Naive thymus-derived CD4-positive, alpha-beta T cell (primary cell): ENCODE measurements at regions of chr14 and their contacts with region 1.

Region 1: DNA sequence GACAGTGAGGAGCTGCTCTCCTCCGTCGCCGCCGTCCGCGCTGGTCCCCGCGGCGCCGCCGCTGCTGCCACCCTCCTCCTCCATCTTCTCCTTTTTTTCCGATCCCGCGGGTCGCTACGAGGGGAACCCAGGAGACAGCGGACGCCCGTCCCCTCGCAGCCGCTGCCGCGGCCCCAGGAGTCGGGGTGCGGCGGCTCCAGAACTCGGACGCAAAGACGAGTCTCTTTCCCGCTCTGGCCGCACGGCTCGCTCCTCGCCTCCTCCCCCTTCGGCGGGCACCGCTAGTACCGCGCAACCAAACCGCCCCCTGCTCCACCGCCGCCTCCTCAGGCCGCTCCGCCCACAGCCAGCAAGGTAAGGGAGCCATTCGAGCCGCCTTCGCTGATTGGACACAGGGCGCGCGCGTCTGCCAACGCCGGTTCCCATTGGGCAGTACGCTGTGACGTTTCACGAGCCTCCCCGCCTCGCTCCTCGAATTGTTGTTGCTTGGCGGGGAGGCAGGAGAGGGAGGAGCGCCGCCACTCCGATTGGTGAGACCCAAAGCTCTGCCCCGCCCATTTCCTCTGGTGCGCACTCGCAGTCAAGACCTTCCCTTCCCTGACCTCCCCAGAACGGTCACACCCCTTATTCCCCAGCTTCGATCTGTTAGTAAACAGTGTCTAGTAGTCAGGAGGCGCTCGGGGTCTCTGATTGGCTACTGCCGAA is at the start of gene RPS6KA5:
- DNase-seq: peak; percentile 93 to 100 (median 100)
- ATAC-seq: peak; percentile 89
- H3K4me3 ChIP-seq: peak within 1 kb of the TSS; percentile 59
- H3K4me3 Mint-ChIP-seq: peak within 1 kb of the TSS in 9 of 10 donors; percentile 80 to 90 (median 86)
- H3K27ac ChIP-seq: peak within 1 kb of the TSS; percentile 91
- H3K27ac Mint-ChIP-seq: peak within 1 kb of the TSS; percentile 28 to 83 (median 74)
- H3K4me1 ChIP-seq: peaks cover 36 to 38% of the 10 kb centered on the region in 2 donors
- H3K4me1 Mint-ChIP-seq: peaks cover 39 to 71% (median 64%) of the 10 kb centered on the region in 7 donors
- H3K27me3 ChIP-seq: no peaks in the 10 kb centered on the region
- H3K27me3 Mint-ChIP-seq: no peaks in the 10 kb centered on the region
- total RNA-seq, gene RPS6KA5: 31.9 to 43.5 (median 34.3) TPM

Region 2: DNA sequence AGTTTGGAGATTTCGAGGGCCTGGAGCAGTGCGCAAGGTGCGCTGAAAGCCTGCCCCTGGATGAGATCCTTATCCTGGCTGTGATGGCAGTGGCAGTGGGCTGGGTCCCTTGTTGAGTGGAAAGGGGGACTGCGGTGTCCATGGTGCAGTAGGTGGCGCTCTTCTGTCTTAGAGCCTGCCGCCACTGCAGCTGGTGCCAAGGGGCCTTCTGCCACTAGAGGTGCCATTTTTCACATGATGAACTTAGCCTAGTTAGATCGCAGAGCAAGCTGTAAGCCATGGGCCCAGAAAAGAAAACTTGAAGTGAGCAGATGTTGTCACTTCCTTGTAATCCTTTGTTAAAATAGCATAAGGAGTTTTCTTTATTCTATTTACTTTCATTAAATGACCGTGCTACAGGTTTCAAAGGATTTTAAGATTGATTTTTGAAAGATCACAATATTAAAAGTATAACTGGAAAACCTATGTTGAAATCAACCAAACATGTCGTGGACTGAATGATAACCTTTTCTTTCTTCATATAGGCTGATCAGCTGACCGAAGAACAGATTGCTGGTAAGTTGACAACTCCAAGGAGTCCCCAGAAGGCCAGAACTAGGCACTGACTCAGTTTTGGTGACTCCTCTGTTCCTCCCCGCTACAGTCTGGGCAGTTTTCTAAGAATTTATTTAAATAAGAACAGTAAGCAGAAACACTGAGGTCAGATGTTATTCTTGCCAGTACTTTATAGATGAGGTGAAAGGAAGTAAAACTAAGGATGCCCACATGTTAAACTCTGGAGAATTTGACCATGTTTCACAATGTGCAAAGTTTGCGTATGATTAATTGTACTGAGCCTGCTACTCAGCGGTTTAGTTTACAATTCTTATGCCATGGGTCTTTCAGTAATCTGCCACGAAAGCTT is 660.7 kb before region 1 on chr14:
- CTCF ChIA-PET with region 1: no interaction called
- POLR2A ChIA-PET with region 1: no interaction called
- intact Hi-C with region 1: loop called in 1 of 2 experiments (anchors 2 kb)
- DNase-seq: peak; percentile 60 to 89 (median 85)
- ATAC-seq: peak; percentile 69
- H3K4me3 ChIP-seq: peak overlapping the region; percentile 78
- H3K4me3 Mint-ChIP-seq: peak overlapping the region; percentile 91 to 100 (median 98)
- H3K27ac ChIP-seq: peak overlapping the region; percentile 92
- H3K27ac Mint-ChIP-seq: peak overlapping the region; percentile 38 to 100 (median 99)
- H3K4me1 ChIP-seq: peaks cover 49 to 50% of the 10 kb centered on the region in 2 donors
- H3K4me1 Mint-ChIP-seq: peaks cover 45 to 70% (median 62%) of the 10 kb centered on the region in 7 donors
- H3K27me3 ChIP-seq: no peaks in the 10 kb centered on the region
- H3K27me3 Mint-ChIP-seq: peaks cover 0 to 7% (median 0%) of the 10 kb centered on the region in 5 donors

Region 3: GRCh38 chr14:91009501-91010152 is 50.9 kb before region 1 on chr14:
- CTCF ChIA-PET with region 1: interaction called, 3 read pairs
- POLR2A ChIA-PET with region 1: interaction called, 3 read pairs
- intact Hi-C with region 1: loop called in 1 of 2 experiments (anchors 5 kb)
- DNase-seq: peak in 7 of 9 donors; percentile 17 to 60 (median 33)
- ATAC-seq: peak; percentile 86
- H3K4me3 ChIP-seq: no peak overlapping the region
- H3K4me3 Mint-ChIP-seq: peak overlapping the region in 9 of 10 donors; percentile 26 to 77 (median 62)
- H3K27ac ChIP-seq: no peak overlapping the region
- H3K27ac Mint-ChIP-seq: peak overlapping the region; percentile 29 to 81 (median 46)
- H3K4me1 ChIP-seq: peaks cover 0 to 28% of the 10 kb centered on the region in 2 donors
- H3K4me1 Mint-ChIP-seq: peaks cover 30 to 49% (median 44%) of the 10 kb centered on the region in 7 donors
- H3K27me3 ChIP-seq: no peaks in the 10 kb centered on the region
- H3K27me3 Mint-ChIP-seq: no peaks in the 10 kb centered on the region

Region 4: GRCh38 chr14:91114079-91115065 is 53.9 kb after region 1 on chr14:
- CTCF ChIA-PET with region 1: interaction called, 37 read pairs
- POLR2A ChIA-PET with region 1: interaction called, 105 read pairs
- intact Hi-C with region 1: loop called (anchors 1 kb)
- DNase-seq: peak; percentile 25 to 75 (median 66)
- ATAC-seq: peak; percentile 84
- H3K4me3 ChIP-seq: peak overlapping the region; percentile 76
- H3K4me3 Mint-ChIP-seq: peak overlapping the region; percentile 84 to 99 (median 93)
- H3K27ac ChIP-seq: peak overlapping the region; percentile 87
- H3K27ac Mint-ChIP-seq: peak overlapping the region; percentile 88 to 97 (median 96)
- H3K4me1 ChIP-seq: peaks cover 54 to 55% of the 10 kb centered on the region in 2 donors
- H3K4me1 Mint-ChIP-seq: peaks cover 46 to 82% (median 73%) of the 10 kb centered on the region in 7 donors
- H3K27me3 ChIP-seq: no peaks in the 10 kb centered on the region
- H3K27me3 Mint-ChIP-seq: no peaks in the 10 kb centered on the region

Region 5: DNA sequence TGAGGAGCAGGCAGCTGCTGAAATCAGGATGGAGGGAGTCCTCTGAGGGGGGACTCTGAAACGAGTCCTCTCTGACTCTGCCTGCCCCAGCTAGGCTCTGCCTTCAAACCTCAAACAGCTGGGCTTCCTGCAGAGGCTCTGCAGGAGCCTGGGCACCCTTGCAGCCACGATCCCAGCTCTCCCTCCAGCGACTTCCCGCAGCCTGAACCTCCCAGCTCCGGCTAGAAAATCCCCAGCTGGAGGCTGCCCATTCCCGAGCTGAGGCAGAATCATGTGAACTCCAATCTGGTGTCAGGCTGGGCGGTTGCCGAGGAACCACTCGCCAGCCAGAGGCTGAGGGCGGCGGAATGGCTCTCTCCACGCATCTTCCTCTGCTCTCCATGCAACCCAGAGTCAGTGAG is 184.0 kb after region 1 on chr14 and contains the start of gene GPR68:
- CTCF ChIA-PET with region 1: no interaction called
- POLR2A ChIA-PET with region 1: interaction called, 16 read pairs
- intact Hi-C with region 1: loop called (anchors 2 kb)
- DNase-seq: peak in 2 of 9 donors; percentile 25 to 39
- ATAC-seq: no peak
- H3K4me3 ChIP-seq: peak within 1 kb of the TSS; percentile 59
- H3K4me3 Mint-ChIP-seq: peak within 1 kb of the TSS; percentile 72 to 91 (median 82)
- H3K27ac ChIP-seq: peak within 1 kb of the TSS; percentile 89
- H3K27ac Mint-ChIP-seq: peak within 1 kb of the TSS; percentile 79 to 100 (median 98)
- H3K4me1 ChIP-seq: peaks cover 51 to 63% of the 10 kb centered on the region in 2 donors
- H3K4me1 Mint-ChIP-seq: peaks cover 56 to 96% (median 89%) of the 10 kb centered on the region in 7 donors
- H3K27me3 ChIP-seq: no peaks in the 10 kb centered on the region
- H3K27me3 Mint-ChIP-seq: no peaks in the 10 kb centered on the region
- total RNA-seq, gene GPR68: 0.86 to 38.6 (median 2.3) TPM

Region 6: DNA sequence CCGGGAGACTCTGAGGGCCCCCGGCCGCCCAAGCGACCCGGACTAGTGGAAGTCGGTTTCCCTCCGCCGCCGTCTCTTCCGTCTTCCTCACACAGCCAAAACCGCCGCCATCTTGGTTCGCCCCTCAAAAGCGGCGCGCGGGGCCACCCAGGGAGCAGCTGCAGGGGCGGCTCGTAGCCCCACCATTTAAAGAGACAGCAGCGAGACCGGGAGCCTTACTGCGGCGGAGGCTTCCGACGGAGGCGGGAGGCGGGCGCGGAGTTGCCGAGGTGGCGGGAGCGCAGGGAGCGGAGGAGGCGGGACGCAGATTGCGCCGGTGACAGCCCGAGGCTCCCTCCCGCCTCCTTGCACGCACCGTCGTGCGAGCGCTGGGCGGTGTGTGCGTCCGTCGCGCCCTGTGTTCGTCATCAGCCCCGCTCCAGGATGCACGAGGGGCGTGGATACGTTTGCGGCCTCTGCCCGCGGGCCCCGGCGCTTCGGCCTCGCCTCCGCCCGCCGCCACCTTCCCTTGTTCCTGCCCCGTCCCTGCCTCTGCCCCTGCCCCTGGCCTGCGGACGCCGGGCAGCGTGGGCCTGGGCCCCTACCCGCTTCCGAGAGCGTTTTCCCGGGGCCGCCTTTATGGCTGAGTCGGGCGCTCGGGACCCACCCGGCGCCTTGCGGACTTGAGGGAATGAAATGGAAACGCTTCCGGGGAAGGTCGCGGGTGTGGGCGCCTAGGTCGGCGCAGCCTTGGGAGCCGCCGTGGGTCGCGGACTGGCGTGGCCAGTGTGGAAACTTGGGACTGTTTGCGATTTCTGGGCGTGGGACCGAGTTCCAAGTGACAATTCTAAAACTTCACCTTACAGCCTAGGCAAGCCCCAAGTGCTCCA is 449.9 kb after region 1 on chr14 and contains the start of gene PPP4R3A:
- CTCF ChIA-PET with region 1: no interaction called
- POLR2A ChIA-PET with region 1: interaction called, 5 read pairs
- intact Hi-C with region 1: loop called (anchors 1 kb)
- DNase-seq: peak; percentile 86 to 96 (median 95)
- ATAC-seq: peak; percentile 92
- H3K4me3 ChIP-seq: peak within 1 kb of the TSS; percentile 62
- H3K4me3 Mint-ChIP-seq: peak within 1 kb of the TSS; percentile 93 to 100 (median 98)
- H3K27ac ChIP-seq: peak within 1 kb of the TSS; percentile 99
- H3K27ac Mint-ChIP-seq: peak within 1 kb of the TSS; percentile 100
- H3K4me1 ChIP-seq: peaks cover 14 to 22% of the 10 kb centered on the region in 2 donors
- H3K4me1 Mint-ChIP-seq: peaks cover 15 to 38% (median 32%) of the 10 kb centered on the region in 7 donors
- H3K27me3 ChIP-seq: no peaks in the 10 kb centered on the region
- H3K27me3 Mint-ChIP-seq: no peaks in the 10 kb centered on the region
- total RNA-seq, gene PPP4R3A: 129 to 214 (median 167) TPM

Region 7: GRCh38 chr14:91755528-91756295 is 695.2 kb after region 1 on chr14:
- CTCF ChIA-PET with region 1: no interaction called
- POLR2A ChIA-PET with region 1: no interaction called
- intact Hi-C with region 1: no loop called
- DNase-seq: no peak
- ATAC-seq: no peak
- H3K4me3 ChIP-seq: no peak overlapping the region
- H3K4me3 Mint-ChIP-seq: no peak overlapping the region
- H3K27ac ChIP-seq: no peak overlapping the region
- H3K27ac Mint-ChIP-seq: no peak overlapping the region
- H3K4me1 ChIP-seq: no peaks in the 10 kb centered on the region
- H3K4me1 Mint-ChIP-seq: peaks cover 0 to 9% (median 2%) of the 10 kb centered on the region in 7 donors
- H3K27me3 ChIP-seq: no peaks in the 10 kb centered on the region
- H3K27me3 Mint-ChIP-seq: no peaks in the 10 kb centered on the region